GM12878 (cell line): ENCODE measurements at regions of chr22 and their contacts with region 1.

Region 1: GRCh38 chr22:17501679-17502285 is 61.5 kb upstream of the SLC25A18 start:
- DNase-seq: peak; percentile 57
- ATAC-seq: peak; percentile 97
- H3K4me3 ChIP-seq: no peak overlapping the region
- H3K27ac ChIP-seq: no peak overlapping the region
- H3K4me1 ChIP-seq: no peaks in the 10 kb centered on the region
- H3K27me3 ChIP-seq: no peaks in the 10 kb centered on the region
- CTCF ChIP-seq: peak; percentile 61 to 88 (median 61); a peak in 5 of 6 replicates
- EP300 ChIP-seq: no peak
- POLR2A ChIP-seq: no peak
- RAD21 ChIP-seq: peak; percentile 94

Region 2: GRCh38 chr22:17057959-17058814 is 443.6 kb before region 1 on chr22:
- CTCF ChIA-PET with region 1: interaction called, 5 read pairs
- POLR2A ChIA-PET with region 1: no interaction called
- RAD21 ChIA-PET with region 1: interaction called, 5 read pairs
- SMC1A ChIA-PET with region 1: interaction called, 5 read pairs
- in situ Hi-C with region 1: no loop called
- intact Hi-C with region 1: loop called (anchors 5 kb)
- DNase-seq: no peak
- ATAC-seq: peak; percentile 90
- H3K4me3 ChIP-seq: no peak overlapping the region
- H3K27ac ChIP-seq: no peak overlapping the region
- H3K4me1 ChIP-seq: no peaks in the 10 kb centered on the region
- H3K27me3 ChIP-seq: no peaks in the 10 kb centered on the region
- CTCF ChIP-seq: peak; percentile 93 to 96 (median 94); a peak in 5 of 6 replicates
- EP300 ChIP-seq: no peak
- POLR2A ChIP-seq: peak; percentile 22; the same call in 1 of the 2 replicates
- RAD21 ChIP-seq: peak; percentile 77

Region 3: DNA sequence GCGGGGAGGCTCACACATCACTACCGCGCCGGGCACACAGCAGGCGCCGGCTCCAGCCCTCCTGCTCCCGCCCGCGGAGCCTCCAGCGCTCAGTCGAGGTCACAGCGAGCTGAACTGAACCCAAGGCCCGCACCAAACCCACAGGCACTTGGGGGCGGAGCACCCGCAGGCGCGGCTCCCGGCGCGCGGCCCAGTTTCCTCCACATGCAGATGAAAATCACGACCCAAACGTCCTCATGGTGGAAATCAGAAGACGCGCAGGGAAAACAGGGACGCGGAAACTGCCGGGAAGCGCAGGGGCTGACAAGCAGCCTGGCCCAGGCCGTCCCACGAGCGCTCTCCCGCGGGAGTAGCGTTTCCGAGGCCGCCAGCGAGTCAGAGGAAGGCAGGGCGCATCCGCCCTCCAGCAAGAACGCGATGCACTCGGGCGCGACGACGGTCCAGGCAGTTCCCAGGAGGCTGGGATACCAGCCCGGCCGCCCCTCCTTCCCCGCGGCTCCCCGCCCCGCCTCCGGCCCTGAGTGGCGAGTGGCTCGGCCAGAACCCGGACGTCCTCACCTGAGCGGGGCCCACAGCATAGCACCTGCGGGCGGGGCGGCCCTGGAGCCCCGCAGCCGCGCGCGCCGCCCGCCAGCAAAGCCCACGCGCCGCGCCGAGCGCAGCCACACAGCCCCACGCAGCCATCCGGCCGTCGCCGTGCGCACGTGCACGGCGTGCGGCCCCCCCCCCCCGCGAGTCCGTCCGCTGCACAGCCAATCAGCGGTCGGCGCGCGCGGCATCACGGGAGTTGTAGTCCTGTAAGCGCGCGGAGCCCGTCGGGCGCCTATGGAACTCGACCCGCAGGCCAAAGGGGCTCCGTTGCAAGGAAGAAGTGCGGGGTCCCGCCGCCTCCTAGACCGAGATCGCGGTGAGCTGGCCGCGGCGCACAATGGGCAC is 342.9 kb before region 1 on chr22 and contains the start of gene HDHD5:
- CTCF ChIA-PET with region 1: interaction called, 5 read pairs
- POLR2A ChIA-PET with region 1: no interaction called
- RAD21 ChIA-PET with region 1: interaction called, 7 read pairs
- SMC1A ChIA-PET with region 1: interaction called, 10 read pairs
- in situ Hi-C with region 1: no loop called
- intact Hi-C with region 1: no loop called
- DNase-seq: no peak
- ATAC-seq: peak; percentile 90
- H3K4me3 ChIP-seq: peak within 1 kb of the TSS; percentile 79
- H3K27ac ChIP-seq: peak within 1 kb of the TSS; percentile 61
- H3K4me1 ChIP-seq: peaks cover 3% of the 10 kb centered on the region; the same call in 1 of the 2 replicates
- H3K27me3 ChIP-seq: no peaks in the 10 kb centered on the region
- CTCF ChIP-seq: no peak
- EP300 ChIP-seq: no peak
- POLR2A ChIP-seq: peak; percentile 47
- RAD21 ChIP-seq: no peak
- polyA plus RNA-seq, gene HDHD5: 1.7 to 7.7 TPM

Region 4: GRCh38 chr22:17201285-17201945 is 300.4 kb before region 1 on chr22:
- CTCF ChIA-PET with region 1: interaction called, 69 read pairs
- POLR2A ChIA-PET with region 1: no interaction called
- RAD21 ChIA-PET with region 1: interaction called, 81 read pairs
- SMC1A ChIA-PET with region 1: interaction called, 50 read pairs
- in situ Hi-C with region 1: no loop called
- intact Hi-C with region 1: loop called (anchors 1 kb)
- DNase-seq: no peak
- ATAC-seq: no peak
- H3K4me3 ChIP-seq: no peak overlapping the region
- H3K27ac ChIP-seq: no peak overlapping the region
- H3K4me1 ChIP-seq: no peaks in the 10 kb centered on the region
- H3K27me3 ChIP-seq: no peaks in the 10 kb centered on the region
- CTCF ChIP-seq: no peak
- EP300 ChIP-seq: no peak
- POLR2A ChIP-seq: no peak
- RAD21 ChIP-seq: no peak

Region 5: DNA sequence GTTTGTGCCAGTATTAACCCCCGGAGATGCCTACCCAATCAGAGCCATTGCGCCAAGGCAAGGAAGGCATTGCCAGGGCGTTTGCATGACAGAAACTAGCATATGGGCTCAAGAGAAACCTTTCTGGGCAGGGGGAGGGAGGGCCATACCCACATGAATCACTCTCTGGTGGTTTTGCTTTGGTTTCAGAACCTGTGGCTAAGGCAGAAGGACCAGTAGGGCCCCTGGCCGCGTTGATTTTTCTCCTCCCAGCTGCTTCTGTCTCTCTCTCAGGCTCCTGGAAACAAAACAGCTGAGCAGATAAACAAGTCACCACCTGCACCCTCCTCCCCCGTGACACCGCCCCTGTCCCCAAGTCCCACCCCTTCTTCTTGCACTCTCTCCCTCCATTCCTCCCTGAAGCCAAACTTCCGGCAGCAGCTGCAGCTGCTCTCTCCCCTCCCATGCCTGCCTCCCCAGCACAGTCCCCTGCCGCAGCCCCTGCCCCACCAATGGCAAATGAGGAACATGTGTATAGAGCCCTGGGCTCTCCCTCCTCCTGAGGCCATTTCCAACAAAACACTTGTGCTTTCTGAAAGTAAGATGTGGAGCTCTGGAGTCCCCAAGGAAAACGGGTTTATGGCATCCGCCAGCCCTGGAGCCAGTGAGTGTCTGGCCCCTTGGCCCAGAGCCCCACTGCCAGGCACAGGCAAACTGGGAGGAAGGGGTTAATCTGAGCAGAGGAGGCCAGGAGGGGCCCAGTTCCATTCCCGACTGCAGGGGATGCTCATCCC is 243.6 kb before region 1 on chr22:
- CTCF ChIA-PET with region 1: no interaction called
- POLR2A ChIA-PET with region 1: no interaction called
- RAD21 ChIA-PET with region 1: interaction called, 7 read pairs
- SMC1A ChIA-PET with region 1: interaction called, 4 read pairs
- in situ Hi-C with region 1: no loop called
- intact Hi-C with region 1: loop called (anchors 5 kb)
- DNase-seq: peak; percentile 98
- ATAC-seq: peak; percentile 96
- H3K4me3 ChIP-seq: 0 out of 2 replicates have a peak overlapping the region, but pooled peaks have one; percentile 28
- H3K27ac ChIP-seq: peak overlapping the region; percentile 81
- H3K4me1 ChIP-seq: peaks cover 24% of the 10 kb centered on the region
- H3K27me3 ChIP-seq: no peaks in the 10 kb centered on the region
- CTCF ChIP-seq: no peak
- EP300 ChIP-seq: peak; percentile 83 to 92
- POLR2A ChIP-seq: no peak
- RAD21 ChIP-seq: peak; percentile 6; the same call in 1 of the 2 replicates

Region 6: DNA sequence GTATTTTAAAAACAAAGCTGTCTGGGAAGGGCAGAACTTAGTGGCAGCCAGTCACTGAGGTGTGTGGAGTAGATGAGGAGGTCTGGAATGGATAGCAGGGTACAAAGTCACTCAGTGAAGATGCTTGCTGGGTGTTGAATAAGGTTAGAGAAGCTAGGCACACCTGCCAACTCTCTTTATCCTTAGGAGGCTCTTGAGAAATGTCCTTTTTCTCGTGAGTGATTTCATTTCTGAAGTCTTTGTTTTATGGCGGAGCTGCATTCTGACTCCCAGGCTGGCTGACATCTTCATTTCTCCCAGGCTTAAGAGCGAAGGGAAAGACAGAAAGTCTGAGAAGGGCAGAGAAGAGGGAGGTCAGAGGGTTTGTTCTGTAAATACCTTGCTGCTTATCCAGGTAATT is 101.5 kb before region 1 on chr22:
- CTCF ChIA-PET with region 1: no interaction called
- POLR2A ChIA-PET with region 1: no interaction called
- RAD21 ChIA-PET with region 1: no interaction called
- SMC1A ChIA-PET with region 1: no interaction called
- in situ Hi-C with region 1: no loop called
- intact Hi-C with region 1: no loop called
- DNase-seq: no peak
- ATAC-seq: no peak
- H3K4me3 ChIP-seq: no peak overlapping the region
- H3K27ac ChIP-seq: no peak overlapping the region
- H3K4me1 ChIP-seq: no peaks in the 10 kb centered on the region
- H3K27me3 ChIP-seq: no peaks in the 10 kb centered on the region
- CTCF ChIP-seq: no peak
- EP300 ChIP-seq: no peak
- POLR2A ChIP-seq: no peak
- RAD21 ChIP-seq: no peak

Region 7: DNA sequence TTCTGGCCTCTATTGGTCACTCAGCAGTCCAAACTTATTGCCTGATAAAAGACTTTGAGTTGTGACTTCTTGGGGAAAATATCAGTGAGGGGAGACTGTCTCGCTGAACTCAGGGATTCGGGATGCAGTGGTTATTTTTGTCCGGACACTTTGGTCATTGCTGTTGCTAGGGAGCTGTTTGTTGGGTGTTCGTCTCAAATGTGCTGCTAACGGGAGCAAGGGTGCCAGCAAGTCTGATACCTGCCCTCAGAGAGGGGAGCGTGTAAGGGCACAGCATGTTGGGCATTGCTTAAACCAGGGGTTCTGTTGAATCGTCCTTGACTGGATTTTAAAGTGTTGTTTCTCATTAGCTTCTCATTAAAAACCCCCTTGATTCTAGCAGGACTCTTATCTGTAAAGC is 12.3 kb after region 1 on chr22:
- CTCF ChIA-PET with region 1: interaction called, 10 read pairs
- POLR2A ChIA-PET with region 1: no interaction called
- RAD21 ChIA-PET with region 1: interaction called, 6 read pairs
- SMC1A ChIA-PET with region 1: interaction called, 3 read pairs
- in situ Hi-C with region 1: no loop called
- intact Hi-C with region 1: no loop called
- DNase-seq: no peak
- ATAC-seq: no peak
- H3K4me3 ChIP-seq: no peak overlapping the region
- H3K27ac ChIP-seq: no peak overlapping the region
- H3K4me1 ChIP-seq: no peaks in the 10 kb centered on the region
- H3K27me3 ChIP-seq: no peaks in the 10 kb centered on the region; a peak in 1 of 4 replicates
- CTCF ChIP-seq: no peak
- EP300 ChIP-seq: no peak
- POLR2A ChIP-seq: no peak
- RAD21 ChIP-seq: no peak

Region 8: GRCh38 chr22:17552737-17553136 is 51.0 kb after region 1 on chr22:
- CTCF ChIA-PET with region 1: no interaction called
- POLR2A ChIA-PET with region 1: no interaction called
- RAD21 ChIA-PET with region 1: no interaction called
- SMC1A ChIA-PET with region 1: no interaction called
- in situ Hi-C with region 1: no loop called
- intact Hi-C with region 1: no loop called
- DNase-seq: no peak
- ATAC-seq: no peak
- H3K4me3 ChIP-seq: no peak overlapping the region
- H3K27ac ChIP-seq: no peak overlapping the region
- H3K4me1 ChIP-seq: no peaks in the 10 kb centered on the region
- H3K27me3 ChIP-seq: no peaks in the 10 kb centered on the region
- CTCF ChIP-seq: no peak
- EP300 ChIP-seq: no peak
- POLR2A ChIP-seq: no peak
- RAD21 ChIP-seq: no peak